K562 (cell line): ENCODE measurements at regions of chr1 and their contacts with region 1.

Region 1: GRCh38 chr1:111864791-111865190 is 109.1 kb downstream of the DDX20 start:
- DNase-seq: peak in 2 of 4 experiments; percentile 4 to 17
- ATAC-seq: peak; percentile 44; the same call in 1 of the 3 replicates
- H3K4me3 ChIP-seq: no peak overlapping the region
- H3K27ac ChIP-seq: no peak overlapping the region
- H3K4me1 ChIP-seq: no peaks in the 10 kb centered on the region
- H3K27me3 ChIP-seq: peaks cover 3 to 5% of the 10 kb centered on the region in 2 experiments; a peak in 2 of 5 replicates
- CTCF ChIP-seq: no peak
- EP300 ChIP-seq: no peak
- POLR2A ChIP-seq: no peak
- RAD21 ChIP-seq: no peak

Region 2: GRCh38 chr1:111801071-111801841 is 63.5 kb before region 1 on chr1:
- CTCF ChIA-PET with region 1: no interaction called
- POLR2A ChIA-PET with region 1: no interaction called
- in situ Hi-C with region 1: no loop called
- intact Hi-C with region 1: loop called (anchors 5 kb)
- DNase-seq: peak; percentile 30 to 37 (median 34)
- ATAC-seq: peak; percentile 91
- H3K4me3 ChIP-seq: no peak overlapping the region
- H3K27ac ChIP-seq: no peak overlapping the region
- H3K4me1 ChIP-seq: no peaks in the 10 kb centered on the region
- H3K27me3 ChIP-seq: peaks cover 50 to 80% of the 10 kb centered on the region in 2 experiments; a peak in 4 of 5 replicates
- CTCF ChIP-seq: peak in 2 of 3 experiments; percentile 46 to 54; a peak in 5 of 6 replicates
- EP300 ChIP-seq: no peak
- POLR2A ChIP-seq: no peak
- RAD21 ChIP-seq: peak; percentile 36 to 61; a peak in 3 of 4 replicates

Region 3: DNA sequence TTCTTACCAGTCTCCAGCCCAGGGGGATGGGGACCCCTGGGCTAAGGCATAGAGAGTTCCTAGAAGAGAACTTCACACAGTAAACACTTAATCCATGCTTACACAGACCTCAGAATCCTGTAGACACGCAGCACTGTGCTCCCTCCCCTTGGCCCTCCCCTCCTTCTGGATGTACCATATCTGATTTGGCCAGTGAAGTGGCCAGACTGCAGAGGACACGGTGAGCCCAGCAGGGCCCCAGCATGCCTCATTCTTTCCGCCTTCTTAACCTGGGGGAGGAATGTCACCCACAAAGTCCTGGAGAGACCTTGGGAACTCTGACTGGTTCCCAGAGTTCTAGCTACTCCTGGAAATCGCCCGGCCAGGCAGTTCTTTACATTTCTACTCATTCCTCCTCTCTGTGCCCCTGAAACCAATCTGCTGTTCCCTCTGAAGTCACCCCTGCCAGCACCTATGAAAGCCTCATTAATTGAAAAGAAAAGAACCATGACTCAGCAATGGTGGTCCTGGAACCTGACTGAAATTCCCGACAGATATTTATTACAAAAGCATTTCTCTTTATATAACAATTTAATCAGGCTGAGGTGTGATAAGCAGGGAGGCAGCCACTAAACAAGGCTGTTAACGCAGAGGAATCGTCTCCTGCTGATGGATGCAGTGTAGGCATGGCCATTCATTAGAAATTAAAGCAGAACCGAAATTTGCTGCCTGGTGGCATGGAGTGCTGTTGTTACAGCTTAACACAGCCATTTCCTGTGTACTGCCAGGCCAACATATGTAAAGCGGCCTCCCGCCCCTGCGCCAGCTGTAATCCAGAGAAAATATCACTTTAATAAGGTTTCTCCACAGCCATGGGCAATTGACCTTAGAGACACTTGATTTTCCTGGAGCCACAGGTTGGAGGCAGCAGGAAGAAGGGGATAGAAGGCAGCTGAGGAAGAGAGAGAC is 199.3 kb after region 1 on chr1:
- CTCF ChIA-PET with region 1: no interaction called
- POLR2A ChIA-PET with region 1: no interaction called
- in situ Hi-C with region 1: no loop called
- intact Hi-C with region 1: no loop called
- DNase-seq: no peak
- ATAC-seq: peak; percentile 37; the same call in 2 of the 3 replicates
- H3K4me3 ChIP-seq: no peak overlapping the region
- H3K27ac ChIP-seq: no peak overlapping the region
- H3K4me1 ChIP-seq: no peaks in the 10 kb centered on the region
- H3K27me3 ChIP-seq: 0 out of 5 replicates have a peak, but pooled peaks cover 0 to 7% of the 10 kb centered on the region in 2 experiments
- CTCF ChIP-seq: no peak
- EP300 ChIP-seq: no peak
- POLR2A ChIP-seq: no peak
- RAD21 ChIP-seq: no peak